A673 (cell line): ENCODE measurements at regions of chr6 and their contacts with region 1.

Region 1: DNA sequence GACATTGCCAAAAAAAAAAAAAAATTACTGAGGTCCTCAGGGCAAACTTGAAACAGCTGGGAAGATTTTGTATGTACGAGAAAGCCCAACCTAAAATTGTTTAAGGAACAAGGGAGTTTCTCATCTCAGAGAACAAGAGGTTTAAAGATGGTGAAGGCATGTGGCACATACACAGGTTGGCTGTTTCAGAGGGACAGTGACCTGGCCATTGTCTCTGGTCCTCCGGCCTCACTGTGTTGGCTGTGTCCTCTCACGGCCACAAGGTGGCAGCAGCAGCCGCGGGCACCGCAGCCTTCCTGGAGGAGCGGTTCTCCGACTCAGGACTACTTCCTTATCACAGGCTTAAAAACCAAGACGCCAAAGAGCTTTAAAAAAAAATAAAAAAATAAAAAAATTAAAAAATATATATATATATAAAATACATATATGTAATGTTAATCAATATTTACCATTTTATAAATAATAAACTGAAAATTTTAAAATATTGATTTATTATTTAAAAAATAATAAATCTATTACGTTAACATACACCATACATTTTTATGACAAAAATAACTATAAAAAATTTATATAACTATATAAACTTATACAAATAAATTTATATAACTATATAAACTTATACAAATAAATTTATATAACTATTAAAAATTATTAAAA is 52.8 kb downstream of the GTF2H5 start:
- DNase-seq: peak; percentile 77
- H3K4me3 ChIP-seq: no peak overlapping the region
- H3K27ac ChIP-seq: no peak overlapping the region
- H3K4me1 ChIP-seq: no peaks in the 10 kb centered on the region
- H3K27me3 ChIP-seq: no peaks in the 10 kb centered on the region
- CTCF ChIP-seq: peak; percentile 92

Region 2: DNA sequence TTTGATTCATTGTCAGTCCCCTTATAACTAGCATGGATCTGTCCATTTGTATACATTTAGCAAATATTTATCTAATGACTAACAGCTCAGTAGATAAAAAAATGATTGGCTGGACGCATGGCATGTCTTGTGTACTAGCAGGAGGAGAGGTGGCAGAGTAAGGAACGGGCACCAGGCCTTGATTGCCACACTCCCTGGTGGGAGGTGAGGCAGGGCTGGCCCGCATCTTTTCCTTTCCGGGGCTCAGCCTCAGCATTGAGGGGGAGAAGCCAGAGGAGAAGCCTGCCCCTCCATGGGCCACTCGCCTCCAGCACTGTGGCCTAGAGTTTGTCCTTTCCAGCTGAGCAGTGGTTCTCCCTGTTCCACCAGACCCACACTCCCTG is 254.0 kb after region 1 on chr6:
- CTCF ChIA-PET with region 1: interaction called, 3 read pairs
- POLR2A ChIA-PET with region 1: no interaction called
- intact Hi-C with region 1: loop called (anchors 5 kb)
- DNase-seq: no peak
- H3K4me3 ChIP-seq: no peak overlapping the region
- H3K27ac ChIP-seq: peak overlapping the region; percentile 85
- H3K4me1 ChIP-seq: peaks cover 58% of the 10 kb centered on the region
- H3K27me3 ChIP-seq: no peaks in the 10 kb centered on the region
- CTCF ChIP-seq: no peak

Region 3: GRCh38 chr6:158518191-158519127 is 297.5 kb after region 1 on chr6:
- CTCF ChIA-PET with region 1: interaction called, 9 read pairs
- POLR2A ChIA-PET with region 1: no interaction called
- intact Hi-C with region 1: loop called (anchors 2 kb)
- DNase-seq: peak; percentile 86
- H3K4me3 ChIP-seq: peak overlapping the region; percentile 39
- H3K27ac ChIP-seq: no peak overlapping the region
- H3K4me1 ChIP-seq: peaks cover 20% of the 10 kb centered on the region
- H3K27me3 ChIP-seq: no peaks in the 10 kb centered on the region
- CTCF ChIP-seq: peak; percentile 76

Region 4: GRCh38 chr6:158605266-158605878 is 384.5 kb after region 1 on chr6:
- CTCF ChIA-PET with region 1: interaction called, 16 read pairs
- POLR2A ChIA-PET with region 1: no interaction called
- intact Hi-C with region 1: loop called (anchors 2 kb)
- DNase-seq: peak; percentile 83
- H3K4me3 ChIP-seq: no peak overlapping the region
- H3K27ac ChIP-seq: no peak overlapping the region
- H3K4me1 ChIP-seq: no peaks in the 10 kb centered on the region
- H3K27me3 ChIP-seq: no peaks in the 10 kb centered on the region
- CTCF ChIP-seq: peak; percentile 79

Region 5: DNA sequence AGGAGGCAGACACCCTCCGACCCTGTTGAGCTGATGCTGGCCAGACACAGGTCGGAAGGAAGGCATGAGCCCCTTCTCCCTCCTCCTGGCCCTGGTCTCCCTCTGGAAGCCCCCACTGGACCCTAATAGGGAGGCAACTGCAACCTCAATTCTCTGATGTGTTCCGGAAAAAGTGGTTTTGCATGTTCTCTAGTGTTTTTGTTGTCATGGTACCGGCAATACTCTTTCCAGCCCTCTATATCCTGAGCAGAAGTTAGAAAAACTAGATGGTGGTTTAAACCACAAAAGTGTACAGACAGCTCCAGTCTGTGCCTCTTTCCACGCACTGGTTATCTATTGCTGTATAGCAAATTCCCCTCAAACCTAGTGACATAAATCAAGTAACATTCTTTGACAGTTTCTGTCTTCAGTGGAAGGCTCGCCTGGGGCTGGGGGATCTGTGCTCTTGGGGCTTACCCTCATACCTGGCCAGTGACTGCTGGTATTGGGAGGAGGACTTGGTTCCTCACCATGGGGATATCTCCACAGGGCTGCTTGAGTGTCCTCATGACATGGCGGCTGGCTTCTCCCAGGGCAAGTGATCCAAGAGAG is 466.0 kb after region 1 on chr6:
- CTCF ChIA-PET with region 1: interaction called, 19 read pairs
- POLR2A ChIA-PET with region 1: no interaction called
- intact Hi-C with region 1: loop called (anchors 2 kb)
- DNase-seq: no peak
- H3K4me3 ChIP-seq: no peak overlapping the region
- H3K27ac ChIP-seq: no peak overlapping the region
- H3K4me1 ChIP-seq: no peaks in the 10 kb centered on the region
- H3K27me3 ChIP-seq: no peaks in the 10 kb centered on the region
- CTCF ChIP-seq: no peak

Region 6: DNA sequence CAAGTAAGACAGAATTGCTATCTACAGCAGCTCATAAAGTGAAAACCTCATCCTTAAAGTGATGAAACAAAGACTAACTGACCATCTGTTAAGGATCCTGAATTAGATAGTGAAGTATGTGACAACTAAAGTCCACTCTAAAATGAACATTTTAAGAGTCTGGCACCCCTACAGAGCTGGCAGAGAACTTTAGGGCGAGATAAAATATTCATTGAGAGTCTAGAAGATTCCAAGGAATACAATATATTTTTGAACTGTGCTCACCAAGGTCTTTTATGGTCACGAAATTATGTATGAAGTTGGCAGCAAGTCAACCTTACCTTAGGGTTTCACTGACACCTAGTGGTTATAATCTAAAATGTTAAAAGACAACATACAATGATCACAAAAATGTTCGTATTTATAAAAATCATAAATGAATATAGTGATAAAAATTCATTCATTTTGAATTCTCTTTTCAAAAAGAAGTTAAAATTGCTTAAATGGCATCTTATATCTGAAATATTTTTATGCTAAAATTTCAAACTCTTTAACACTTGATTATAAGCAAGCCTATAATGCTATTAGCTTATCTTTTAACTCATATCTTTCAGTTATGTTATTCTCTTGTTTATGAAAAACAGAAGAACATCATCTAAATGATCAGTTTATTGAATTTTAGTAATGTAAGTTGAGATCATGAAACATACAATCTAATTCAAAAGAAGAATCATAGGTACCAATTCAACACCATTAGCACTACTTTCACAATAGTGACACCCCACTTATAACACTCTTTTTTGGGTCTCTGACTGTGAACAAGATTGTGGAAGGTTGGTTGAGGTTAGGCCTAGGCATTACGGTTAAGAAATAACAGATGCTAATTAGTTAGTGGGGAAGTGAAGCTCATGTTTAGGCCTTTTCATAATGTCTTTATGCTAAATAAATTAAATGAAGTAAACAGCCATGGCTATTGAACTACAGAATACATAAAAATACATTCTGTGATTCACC is 751.6 kb after region 1 on chr6:
- CTCF ChIA-PET with region 1: no interaction called
- POLR2A ChIA-PET with region 1: no interaction called
- intact Hi-C with region 1: loop called (anchors 5 kb)
- DNase-seq: peak; percentile 67
- H3K4me3 ChIP-seq: no peak overlapping the region
- H3K27ac ChIP-seq: no peak overlapping the region
- H3K4me1 ChIP-seq: no peaks in the 10 kb centered on the region
- H3K27me3 ChIP-seq: no peaks in the 10 kb centered on the region
- CTCF ChIP-seq: peak; percentile 66; the same call in 1 of the 2 replicates